Sigmoid colon (tissue), 7 donors: ENCODE measurements at regions of chr6 and their contacts with region 1.

Region 1: GRCh38 chr6:159789377-159790148 is at the start of gene TCP1:
- DNase-seq: peak; percentile 100
- H3K4me3 ChIP-seq: peak within 1 kb of the TSS; percentile 86 to 97 (median 96)
- H3K27ac ChIP-seq: peak within 1 kb of the TSS; percentile 96 to 99 (median 98)
- H3K4me1 ChIP-seq: peaks cover 0 to 73% (median 50%) of the 10 kb centered on the region in 4 donors
- H3K27me3 ChIP-seq: no peaks in the 10 kb centered on the region
- CTCF ChIP-seq: no peak
- EP300 ChIP-seq: peak in 1 of 4 donors; percentile 74
- POLR2A ChIP-seq: peak; percentile 96 to 97
- total RNA-seq, gene TCP1: 117 to 123 (median 119) TPM

Region 2: DNA sequence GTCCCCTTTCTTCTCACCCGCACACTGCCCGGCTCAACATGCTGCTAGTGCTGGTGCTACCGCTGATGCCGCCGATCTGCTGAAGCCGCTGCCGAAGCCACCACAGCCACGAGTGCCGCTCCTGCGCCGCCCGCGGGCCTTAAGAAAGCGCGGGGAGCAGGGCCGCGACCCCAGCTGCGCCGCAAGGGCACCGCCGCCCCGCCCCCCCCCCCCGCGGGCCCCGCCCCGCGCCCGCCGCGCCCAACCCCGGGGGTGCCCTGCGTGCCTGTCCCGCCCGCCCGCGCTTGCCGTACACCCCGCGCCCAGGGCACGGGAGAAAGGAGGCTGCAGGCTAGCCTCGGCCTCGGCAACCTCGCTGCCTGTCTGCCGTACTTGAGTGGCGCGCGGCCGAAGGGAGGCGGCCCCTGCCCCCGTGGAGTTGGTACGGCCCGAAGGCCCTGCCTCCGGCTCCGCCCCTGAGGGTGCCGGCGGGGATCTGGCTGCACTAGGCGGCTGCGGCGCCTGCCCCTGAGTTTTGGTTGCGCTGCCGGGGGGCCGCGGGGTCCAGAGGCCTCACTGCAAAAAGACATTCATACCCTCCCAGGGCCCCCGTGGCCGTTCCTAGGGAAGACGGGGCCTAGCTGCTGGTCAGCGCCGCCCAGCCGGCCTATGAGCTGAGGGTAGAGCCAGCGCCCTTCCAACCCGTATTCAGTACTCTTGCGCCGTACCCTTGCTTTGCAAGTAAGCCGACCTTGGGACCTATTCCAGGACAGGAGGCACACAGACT is 96.3 kb before region 1 on chr6 and contains the start of gene SOD2:
- intact Hi-C with region 1: loop called (anchors 1 kb)
- DNase-seq: peak; percentile 93
- H3K4me3 ChIP-seq: peak within 1 kb of the TSS; percentile 64 to 100 (median 86)
- H3K27ac ChIP-seq: peak within 1 kb of the TSS; percentile 93 to 100 (median 98)
- H3K4me1 ChIP-seq: peaks cover 0 to 59% (median 41%) of the 10 kb centered on the region in 4 donors
- H3K27me3 ChIP-seq: no peaks in the 10 kb centered on the region
- CTCF ChIP-seq: no peak
- EP300 ChIP-seq: no peak
- POLR2A ChIP-seq: peak; percentile 94 to 96
- total RNA-seq, gene SOD2: 171 to 1,498 (median 369) TPM

Region 3: GRCh38 chr6:159726918-159727716 is 62.4 kb before region 1 on chr6 and contains the start of gene WTAP:
- intact Hi-C with region 1: loop called (anchors 1 kb)
- DNase-seq: peak; percentile 98
- H3K4me3 ChIP-seq: peak within 1 kb of the TSS; percentile 79 to 98 (median 92)
- H3K27ac ChIP-seq: peak within 1 kb of the TSS; percentile 97 to 100 (median 100)
- H3K4me1 ChIP-seq: peaks cover 0 to 49% (median 44%) of the 10 kb centered on the region in 4 donors
- H3K27me3 ChIP-seq: no peaks in the 10 kb centered on the region
- CTCF ChIP-seq: no peak
- EP300 ChIP-seq: peak in 1 of 4 donors; percentile 7
- POLR2A ChIP-seq: peak; percentile 22 to 79
- total RNA-seq, gene WTAP: 64.5 to 93.8 (median 75.6) TPM

Region 4: GRCh38 chr6:159754959-159755914 is 34.3 kb before region 1 on chr6:
- intact Hi-C with region 1: loop called (anchors 5 kb)
- DNase-seq: no peak
- H3K4me3 ChIP-seq: no peak overlapping the region
- H3K27ac ChIP-seq: peak overlapping the region in 1 of 4 donors; percentile 17
- H3K4me1 ChIP-seq: no peaks in the 10 kb centered on the region
- H3K27me3 ChIP-seq: no peaks in the 10 kb centered on the region
- CTCF ChIP-seq: no peak
- EP300 ChIP-seq: no peak
- POLR2A ChIP-seq: no peak

Region 5: GRCh38 chr6:159761873-159762680 is 27.5 kb before region 1 on chr6 and contains the start of gene ACAT2:
- intact Hi-C with region 1: loop called (anchors 2 kb)
- DNase-seq: peak; percentile 99
- H3K4me3 ChIP-seq: peak within 1 kb of the TSS; percentile 74 to 99 (median 92)
- H3K27ac ChIP-seq: peak within 1 kb of the TSS; percentile 98 to 100 (median 100)
- H3K4me1 ChIP-seq: peaks cover 0 to 20% (median 12%) of the 10 kb centered on the region in 4 donors
- H3K27me3 ChIP-seq: no peaks in the 10 kb centered on the region
- CTCF ChIP-seq: no peak
- EP300 ChIP-seq: no peak
- POLR2A ChIP-seq: peak in 1 of 2 donors; percentile 65
- total RNA-seq, gene ACAT2: 4.1 to 12.1 (median 5.2) TPM

Region 6: DNA sequence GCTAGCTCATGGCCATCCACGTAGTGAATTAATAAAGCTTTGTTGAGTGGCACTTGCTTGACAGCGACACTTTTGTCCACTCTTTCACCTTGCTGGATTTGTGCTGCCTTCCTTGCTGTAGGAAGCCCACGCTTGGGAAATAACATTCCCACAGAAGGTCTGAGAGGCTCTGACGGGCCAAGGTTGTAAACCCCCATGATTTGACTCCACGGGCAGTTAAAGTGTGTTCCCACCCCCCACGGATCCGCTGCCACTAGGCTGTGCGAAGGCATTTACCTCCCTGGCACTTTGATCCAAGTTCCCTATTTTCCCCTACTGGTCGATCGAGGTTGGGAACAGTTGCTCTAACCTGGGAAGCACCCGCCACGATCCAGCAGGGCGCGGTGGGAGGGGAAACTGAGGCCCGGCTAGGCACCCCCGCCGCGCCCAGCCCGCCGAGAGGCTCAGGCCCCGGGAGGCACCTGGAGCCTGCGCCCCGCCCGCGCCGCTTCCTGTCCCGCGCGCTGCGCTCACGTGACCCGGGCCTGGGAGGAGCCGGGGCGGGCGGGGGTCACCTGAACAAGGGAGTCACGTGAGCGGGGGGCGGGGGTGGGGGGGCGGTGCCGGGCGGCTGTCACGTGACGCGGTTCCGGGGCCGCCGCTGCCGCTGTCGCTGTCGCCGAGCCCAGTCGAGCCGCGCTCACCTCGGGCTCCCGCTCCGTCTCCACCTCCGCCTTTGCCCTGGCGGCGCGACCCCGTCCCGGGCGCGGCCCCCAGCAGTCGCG is 179.1 kb after region 1 on chr6 and contains the start of gene IGF2R:
- intact Hi-C with region 1: loop called (anchors 2 kb)
- DNase-seq: peak; percentile 98
- H3K4me3 ChIP-seq: peak within 1 kb of the TSS; percentile 86 to 98 (median 92)
- H3K27ac ChIP-seq: peak within 1 kb of the TSS; percentile 83 to 94 (median 89)
- H3K4me1 ChIP-seq: peaks cover 0 to 37% (median 25%) of the 10 kb centered on the region in 4 donors
- H3K27me3 ChIP-seq: no peaks in the 10 kb centered on the region
- CTCF ChIP-seq: no peak
- EP300 ChIP-seq: peak in 1 of 4 donors; percentile 17
- POLR2A ChIP-seq: peak; percentile 49 to 53
- total RNA-seq, gene IGF2R: 34.6 to 80.9 (median 42.8) TPM

Region 7: GRCh38 chr6:160030103-160030502 is 240.5 kb after region 1 on chr6:
- intact Hi-C with region 1: loop called (anchors 2 kb)
- DNase-seq: peak; percentile 91
- H3K4me3 ChIP-seq: peak overlapping the region in 2 of 4 donors; percentile 1 to 14
- H3K27ac ChIP-seq: peak overlapping the region; percentile 72 to 82 (median 76)
- H3K4me1 ChIP-seq: peaks cover 0 to 22% (median 18%) of the 10 kb centered on the region in 4 donors
- H3K27me3 ChIP-seq: no peaks in the 10 kb centered on the region
- CTCF ChIP-seq: no peak
- EP300 ChIP-seq: peak in 1 of 4 donors; percentile 58
- POLR2A ChIP-seq: no peak

Region 8: DNA sequence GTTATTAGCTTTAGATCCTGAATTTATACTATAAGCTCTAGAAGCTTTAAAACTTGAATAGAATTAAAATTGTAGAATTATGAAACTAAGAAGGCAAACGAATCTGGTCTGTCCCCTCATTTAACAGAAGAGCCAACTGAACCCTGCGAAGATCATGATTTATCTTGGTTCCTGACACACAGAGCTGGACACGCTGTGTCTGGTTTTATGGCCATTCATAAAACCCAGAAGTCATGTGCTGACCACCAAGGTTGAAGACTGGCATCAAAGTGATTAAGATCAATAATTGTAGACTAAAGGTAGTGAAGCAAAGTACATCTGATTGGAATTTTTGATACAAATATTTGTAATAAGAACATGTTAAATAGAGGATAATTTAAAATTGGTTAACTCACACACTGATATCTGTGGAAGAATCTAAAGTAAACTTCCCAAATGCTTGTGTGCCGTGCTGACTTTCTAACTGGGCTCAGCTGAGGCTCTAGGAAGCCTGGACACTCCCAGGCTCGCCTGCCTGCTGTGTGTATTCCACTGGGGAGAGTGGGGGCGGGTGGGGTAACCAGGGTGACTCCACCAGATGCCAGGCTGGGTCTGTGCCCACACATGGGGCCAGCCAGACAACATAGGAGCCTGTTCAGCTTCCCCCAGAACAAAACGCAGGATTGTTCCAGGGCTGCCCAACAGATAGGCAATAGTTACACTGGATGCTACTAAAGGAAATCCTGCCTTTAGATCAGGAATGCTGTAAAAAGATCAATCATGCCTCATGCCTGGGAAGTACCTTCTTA is 516.6 kb after region 1 on chr6:
- intact Hi-C with region 1: no loop called
- DNase-seq: peak; percentile 79
- H3K4me3 ChIP-seq: no peak overlapping the region
- H3K27ac ChIP-seq: peak overlapping the region in 1 of 4 donors; percentile 17
- H3K4me1 ChIP-seq: peaks cover 0 to 8% (median 6%) of the 10 kb centered on the region in 4 donors
- H3K27me3 ChIP-seq: no peaks in the 10 kb centered on the region
- CTCF ChIP-seq: no peak
- EP300 ChIP-seq: no peak
- POLR2A ChIP-seq: no peak